ENCODE measurements at regions of chr13 and their contacts with region 1.

Region 1: GRCh38 chr13:25943658-25944057 is 108.2 kb downstream of the SHISA2 start:
- DNase-seq: no peak
- H3K4me3 ChIP-seq: no peak overlapping the region
- CTCF ChIP-seq: no peak

Region 2: DNA sequence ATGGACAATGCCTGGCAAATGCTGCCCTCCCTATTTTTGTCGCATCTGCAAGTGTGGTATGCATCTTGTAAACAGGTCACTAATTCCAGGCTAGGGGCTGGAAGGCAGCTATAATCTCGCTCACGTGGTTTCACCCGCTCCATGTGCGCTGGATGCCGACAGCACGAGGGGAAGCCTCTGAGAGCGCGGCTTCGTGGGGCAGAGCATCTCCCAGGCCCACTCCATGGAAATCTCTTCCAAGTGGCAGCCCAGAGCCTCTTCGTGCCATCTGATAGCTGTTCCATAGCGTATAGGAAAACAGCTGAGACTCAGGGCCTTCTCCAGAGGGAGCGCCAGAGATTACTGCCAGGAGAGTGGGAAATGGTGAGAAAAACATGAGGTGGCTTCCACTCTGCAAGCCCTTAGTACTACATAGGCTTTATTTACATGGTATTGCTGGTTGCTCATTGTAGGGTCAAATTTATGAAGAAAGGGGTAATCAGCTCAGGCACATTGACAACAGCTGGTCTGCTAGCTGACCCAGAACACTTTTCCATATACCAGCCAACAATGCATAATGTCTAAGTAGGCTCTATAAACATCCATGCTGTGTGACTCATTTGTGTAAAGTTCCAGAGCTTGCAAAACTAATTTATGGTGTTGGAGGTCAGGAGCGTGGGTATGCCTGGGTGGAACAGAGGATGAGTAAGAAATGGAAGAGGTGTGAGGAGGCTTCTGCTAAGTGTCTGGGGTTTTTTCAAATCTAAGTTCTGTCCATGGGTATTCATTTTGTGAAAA is 57.0 kb before region 1 on chr13:
- in situ Hi-C with region 1: loop called (anchors 10 kb)
- DNase-seq: peak; percentile 65
- H3K4me3 ChIP-seq: no peak overlapping the region
- CTCF ChIP-seq: no peak